Esophagus squamous epithelium (tissue), 5 donors: ENCODE measurements at regions of chr2 and their contacts with region 1.

Region 1: DNA sequence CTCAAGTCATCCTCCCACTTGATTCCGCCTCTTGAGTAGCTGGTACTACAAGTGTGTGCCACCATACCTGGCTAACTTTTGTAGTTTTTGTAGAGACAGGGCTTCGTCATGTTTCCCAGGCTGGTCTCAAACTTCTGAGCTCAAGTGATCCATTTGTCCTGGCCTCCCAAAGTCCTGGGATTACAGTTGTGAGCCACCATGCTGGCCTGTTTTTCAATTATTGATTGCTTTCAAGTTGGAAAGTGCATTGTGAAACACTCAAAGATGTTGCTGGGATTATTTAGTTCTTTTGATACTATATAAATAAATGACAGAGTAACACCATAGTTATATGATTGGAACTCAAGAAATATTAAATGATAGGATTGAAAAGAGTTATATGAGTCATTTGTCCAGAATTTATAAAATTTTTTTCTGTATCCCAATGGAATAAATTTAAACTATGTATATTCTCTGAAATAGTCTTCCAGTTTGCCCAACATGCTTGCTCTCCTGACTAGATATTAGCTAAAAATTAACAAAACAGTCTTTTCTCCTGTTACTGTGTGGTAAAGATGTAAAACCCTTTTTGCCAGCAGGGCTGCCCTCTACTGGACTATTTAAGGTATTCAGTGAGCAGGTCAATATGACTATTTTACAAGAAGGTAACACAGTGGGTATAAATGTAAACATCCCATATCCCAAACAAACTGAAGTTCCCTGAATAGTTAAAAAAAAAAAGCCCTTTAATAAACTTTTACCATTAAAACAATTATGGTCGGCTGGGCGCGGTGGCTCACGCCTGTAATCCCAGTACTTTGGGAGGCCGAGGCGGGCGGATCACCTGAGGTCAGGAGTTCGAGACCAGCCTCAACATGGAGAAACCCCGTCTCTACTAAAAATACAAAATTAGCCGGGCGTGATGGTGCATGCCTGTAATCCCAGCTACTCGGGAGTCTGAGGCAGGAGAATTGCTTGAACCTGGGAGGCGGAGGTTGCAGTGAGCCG is 42.7 kb downstream of the ACSL3 start:
- DNase-seq: peak; percentile 1
- H3K4me3 ChIP-seq: no peak overlapping the region
- H3K27ac ChIP-seq: no peak overlapping the region
- H3K4me1 ChIP-seq: peaks cover 0 to 41% (median 12%) of the 10 kb centered on the region in 3 donors
- H3K27me3 ChIP-seq: no peaks in the 10 kb centered on the region
- CTCF ChIP-seq: peak; percentile 36 to 76 (median 60)
- POLR2A ChIP-seq: no peak

Region 2: GRCh38 chr2:222707689-222708525 is 195.6 kb before region 1 on chr2:
- intact Hi-C with region 1: loop called (anchors 5 kb)
- DNase-seq: no peak
- H3K4me3 ChIP-seq: no peak overlapping the region
- H3K27ac ChIP-seq: no peak overlapping the region
- H3K4me1 ChIP-seq: peaks cover 0 to 21% (median 7%) of the 10 kb centered on the region in 3 donors
- H3K27me3 ChIP-seq: no peaks in the 10 kb centered on the region
- CTCF ChIP-seq: peak; percentile 94 to 99 (median 96)
- POLR2A ChIP-seq: no peak

Region 3: DNA sequence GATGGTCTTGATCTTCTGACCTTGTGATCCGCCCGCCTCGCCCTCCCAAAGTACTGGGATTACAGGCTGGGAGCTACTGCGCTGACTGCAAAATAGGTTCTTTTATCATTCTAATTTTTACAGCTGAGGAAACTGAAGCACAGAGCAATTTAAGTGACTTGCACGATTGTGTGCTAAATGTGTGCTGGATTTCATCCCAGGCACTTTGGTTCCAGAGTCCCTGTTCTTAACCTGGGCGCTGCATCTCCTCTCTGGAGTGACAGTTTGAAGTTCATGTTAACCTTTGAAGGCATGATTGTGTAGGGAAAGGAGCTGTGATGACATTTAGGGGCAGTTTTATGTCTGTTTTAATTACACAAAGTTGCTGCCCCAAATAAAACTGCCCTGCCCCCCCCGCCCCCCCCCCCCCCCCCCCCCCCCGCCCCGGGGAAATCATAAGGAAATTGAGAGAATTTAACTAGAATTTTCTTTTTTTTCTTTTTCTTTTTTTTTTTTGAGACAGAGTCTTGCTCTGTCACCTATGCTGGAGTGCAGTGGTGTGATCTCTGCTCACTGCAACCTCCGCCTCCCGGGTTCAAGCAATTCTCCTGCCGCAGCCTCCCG is 37.1 kb before region 1 on chr2:
- intact Hi-C with region 1: loop called (anchors 5 kb)
- DNase-seq: no peak
- H3K4me3 ChIP-seq: no peak overlapping the region
- H3K27ac ChIP-seq: no peak overlapping the region
- H3K4me1 ChIP-seq: peaks cover 6 to 60% (median 29%) of the 10 kb centered on the region in 3 donors
- H3K27me3 ChIP-seq: no peaks in the 10 kb centered on the region
- CTCF ChIP-seq: no peak
- POLR2A ChIP-seq: no peak